H1 (cell line): ENCODE measurements at regions of chr1 and their contacts with region 1.

Region 1: GRCh38 chr1:172398970-172399755 is 21.3 kb upstream of the C1orf105 start:
- DNase-seq: no peak
- H3K4me3 ChIP-seq: no peak overlapping the region; a peak in 1 of 8 replicates
- H3K27ac ChIP-seq: no peak overlapping the region
- H3K4me1 ChIP-seq: peaks cover 4 to 9% (median 5%) of the 10 kb centered on the region in 4 experiments; a peak in 5 of 7 replicates
- H3K27me3 ChIP-seq: no peaks in the 10 kb centered on the region
- CTCF ChIP-seq: peak in 1 of 3 experiments; percentile 27; a peak in 1 of 4 replicates
- EP300 ChIP-seq: no peak
- POLR2A ChIP-seq: no peak
- RAD21 ChIP-seq: peak; percentile 62

Region 2: DNA sequence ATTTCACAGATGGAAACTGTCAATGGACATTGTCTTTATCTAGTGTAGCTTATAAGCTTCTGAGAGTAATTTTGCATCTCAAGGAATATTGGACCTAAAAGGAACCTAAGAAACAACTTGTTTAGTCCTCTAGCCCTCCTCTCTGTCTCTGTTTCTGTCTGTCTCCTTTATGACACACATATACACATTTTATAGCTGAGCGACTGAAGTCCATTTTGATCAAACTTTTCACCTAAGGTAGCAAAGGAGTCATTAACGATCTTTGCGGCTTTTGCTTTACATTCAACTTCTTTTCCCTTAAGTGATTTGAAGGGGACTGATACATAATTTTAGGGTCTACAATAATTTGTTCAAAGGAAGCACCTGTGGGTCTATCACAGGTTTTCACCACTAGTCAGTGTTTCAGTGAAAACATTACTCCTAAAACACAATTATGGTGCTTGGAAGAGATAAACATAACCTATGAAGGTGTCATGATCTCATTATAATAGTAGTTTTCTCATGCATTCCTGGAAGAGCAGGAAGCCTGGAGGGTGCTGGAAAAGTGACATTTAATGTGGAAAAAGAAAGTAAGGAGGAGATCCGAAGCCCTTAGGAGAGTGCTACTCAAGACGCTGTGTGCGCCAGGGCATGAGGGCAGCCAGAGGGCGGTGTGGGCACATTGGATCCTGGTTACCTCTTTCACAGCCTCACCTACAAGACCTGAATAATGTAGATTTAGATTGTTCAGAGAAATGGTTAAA is 309.2 kb before region 1 on chr1:
- CTCF ChIA-PET with region 1: interaction called, 20 read pairs
- POLR2A ChIA-PET with region 1: no interaction called
- DNase-seq: peak; percentile 57 to 61
- H3K4me3 ChIP-seq: no peak overlapping the region
- H3K27ac ChIP-seq: no peak overlapping the region
- H3K4me1 ChIP-seq: peaks cover 0 to 5% (median 0%) of the 10 kb centered on the region in 4 experiments; a peak in 1 of 7 replicates
- H3K27me3 ChIP-seq: no peaks in the 10 kb centered on the region
- CTCF ChIP-seq: peak; percentile 87 to 96 (median 93)
- EP300 ChIP-seq: no peak
- POLR2A ChIP-seq: no peak
- RAD21 ChIP-seq: peak; percentile 92 to 94

Region 3: DNA sequence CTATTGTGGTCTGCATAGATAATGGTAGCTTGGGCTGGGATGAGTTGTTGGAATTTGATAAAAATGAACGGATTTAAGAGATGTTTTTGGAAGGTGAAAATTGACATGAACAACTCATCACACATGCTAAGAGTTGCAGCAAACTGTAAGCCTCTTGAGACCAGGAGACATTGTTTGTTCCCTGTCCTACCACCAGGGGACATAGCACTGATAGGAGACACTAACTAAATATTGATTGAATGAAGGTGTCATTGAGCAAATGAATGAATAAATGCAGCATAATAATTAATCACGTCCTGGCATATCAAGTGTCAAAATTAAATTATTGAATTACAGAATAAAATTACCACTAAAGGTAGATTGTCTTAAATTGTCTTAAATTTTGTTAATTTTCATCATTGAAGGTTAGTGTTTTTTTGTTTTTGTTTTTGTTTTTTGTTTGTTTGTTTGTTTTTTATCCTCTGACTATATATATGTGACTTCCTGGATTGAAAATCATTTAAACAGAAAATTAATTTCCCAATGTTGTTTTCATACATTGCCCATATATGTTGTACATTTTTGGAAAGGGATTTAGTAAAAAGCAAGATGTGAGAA is 264.0 kb before region 1 on chr1:
- CTCF ChIA-PET with region 1: interaction called, 20 read pairs
- POLR2A ChIA-PET with region 1: no interaction called
- DNase-seq: no peak
- H3K4me3 ChIP-seq: no peak overlapping the region
- H3K27ac ChIP-seq: no peak overlapping the region
- H3K4me1 ChIP-seq: no peaks in the 10 kb centered on the region
- H3K27me3 ChIP-seq: no peaks in the 10 kb centered on the region
- CTCF ChIP-seq: peak in 2 of 3 experiments; percentile 47 to 78; a peak in 2 of 4 replicates
- EP300 ChIP-seq: no peak
- POLR2A ChIP-seq: no peak
- RAD21 ChIP-seq: peak; percentile 62 to 66

Region 4: GRCh38 chr1:172414331-172414730 is 15.2 kb after region 1 on chr1:
- CTCF ChIA-PET with region 1: interaction called, 32 read pairs
- POLR2A ChIA-PET with region 1: no interaction called
- DNase-seq: no peak
- H3K4me3 ChIP-seq: no peak overlapping the region
- H3K27ac ChIP-seq: no peak overlapping the region
- H3K4me1 ChIP-seq: peaks cover 0 to 4% (median 0%) of the 10 kb centered on the region in 4 experiments; a peak in 1 of 7 replicates
- H3K27me3 ChIP-seq: no peaks in the 10 kb centered on the region
- CTCF ChIP-seq: no peak
- EP300 ChIP-seq: no peak
- POLR2A ChIP-seq: no peak
- RAD21 ChIP-seq: no peak